GM12878 (cell line): ENCODE measurements at regions of chr9 and their contacts with region 1.

Region 1: DNA sequence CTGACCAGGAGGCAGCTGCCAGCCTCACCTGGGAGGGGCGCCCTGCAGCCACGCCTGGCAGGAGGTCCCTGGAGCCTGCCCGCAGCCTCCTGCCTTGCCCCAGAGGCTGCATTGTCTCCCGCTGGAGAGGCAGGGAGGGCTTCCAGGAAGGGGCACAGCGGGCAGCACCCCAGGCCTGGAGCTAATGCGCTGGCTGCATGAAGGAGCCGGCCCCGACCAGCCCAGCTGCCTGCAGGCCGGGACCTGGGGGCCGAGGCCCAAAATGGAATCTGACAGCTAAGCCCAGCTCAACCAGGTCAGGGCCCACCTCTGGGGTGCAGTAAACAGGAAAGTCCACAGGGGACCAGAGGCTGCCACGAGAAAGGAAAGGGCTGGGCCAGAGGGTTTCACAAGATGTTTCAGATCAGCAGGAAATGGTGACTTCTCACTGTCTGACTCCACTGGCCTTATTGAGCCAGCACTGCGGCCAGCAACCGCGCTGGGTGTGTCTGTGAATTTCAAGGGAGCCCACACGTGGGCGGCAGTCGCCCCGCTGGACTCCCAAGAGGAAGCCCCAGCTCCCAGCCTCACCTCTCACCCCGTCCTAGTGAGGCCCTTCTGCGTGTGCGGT is 18.6 kb upstream of the NOTCH1 start:
- DNase-seq: peak; percentile 63
- ATAC-seq: peak; percentile 94
- H3K4me3 ChIP-seq: no peak overlapping the region
- H3K27ac ChIP-seq: peak overlapping the region; percentile 24; the same call in 1 of the 2 replicates
- H3K4me1 ChIP-seq: peaks cover 29% of the 10 kb centered on the region
- H3K27me3 ChIP-seq: no peaks in the 10 kb centered on the region
- CTCF ChIP-seq: peak in 2 of 3 experiments; percentile 23 to 38; a peak in 3 of 6 replicates
- EP300 ChIP-seq: 0 out of 4 replicates have a peak, but pooled peaks of 1 of the 2 experiments have one; percentile 24
- POLR2A ChIP-seq: no peak
- RAD21 ChIP-seq: 0 out of 2 replicates have a peak, but pooled peaks have one; percentile 24

Region 2: GRCh38 chr9:136474974-136475865 is 89.3 kb before region 1 on chr9:
- CTCF ChIA-PET with region 1: no interaction called
- POLR2A ChIA-PET with region 1: no interaction called
- RAD21 ChIA-PET with region 1: no interaction called
- SMC1A ChIA-PET with region 1: no interaction called
- in situ Hi-C with region 1: no loop called
- intact Hi-C with region 1: no loop called
- DNase-seq: no peak
- ATAC-seq: no peak; the same call in 2 of the 3 replicates
- H3K4me3 ChIP-seq: no peak overlapping the region
- H3K27ac ChIP-seq: no peak overlapping the region
- H3K4me1 ChIP-seq: no peaks in the 10 kb centered on the region
- H3K27me3 ChIP-seq: no peaks in the 10 kb centered on the region
- CTCF ChIP-seq: no peak
- EP300 ChIP-seq: no peak
- POLR2A ChIP-seq: no peak; the same call in 1 of the 2 replicates
- RAD21 ChIP-seq: no peak

Region 3: GRCh38 chr9:136539427-136540421 is 24.8 kb before region 1 on chr9:
- CTCF ChIA-PET with region 1: interaction called, 5 read pairs
- POLR2A ChIA-PET with region 1: interaction called, 22 read pairs
- RAD21 ChIA-PET with region 1: interaction called, 18 read pairs
- SMC1A ChIA-PET with region 1: interaction called, 24 read pairs
- in situ Hi-C with region 1: no loop called
- intact Hi-C with region 1: no loop called
- DNase-seq: peak; percentile 70
- ATAC-seq: peak; percentile 84
- H3K4me3 ChIP-seq: peak overlapping the region; percentile 13
- H3K27ac ChIP-seq: peak overlapping the region; percentile 64
- H3K4me1 ChIP-seq: peaks cover 56% of the 10 kb centered on the region
- H3K27me3 ChIP-seq: no peaks in the 10 kb centered on the region
- CTCF ChIP-seq: no peak
- EP300 ChIP-seq: no peak
- POLR2A ChIP-seq: peak; percentile 50; the same call in 1 of the 2 replicates
- RAD21 ChIP-seq: no peak

Region 4: GRCh38 chr9:136545966-136546698 is 18.4 kb before region 1 on chr9 and contains the start of gene NOTCH1:
- CTCF ChIA-PET with region 1: interaction called, 5 read pairs
- POLR2A ChIA-PET with region 1: interaction called, 31 read pairs
- RAD21 ChIA-PET with region 1: interaction called, 4 read pairs
- SMC1A ChIA-PET with region 1: interaction called, 24 read pairs
- in situ Hi-C with region 1: no loop called
- intact Hi-C with region 1: no loop called
- DNase-seq: peak; percentile 80
- ATAC-seq: peak; percentile 83
- H3K4me3 ChIP-seq: peak within 1 kb of the TSS; percentile 99
- H3K27ac ChIP-seq: peak within 1 kb of the TSS; percentile 83
- H3K4me1 ChIP-seq: peaks cover 37% of the 10 kb centered on the region
- H3K27me3 ChIP-seq: no peaks in the 10 kb centered on the region
- CTCF ChIP-seq: peak in 1 of 3 experiments; percentile 6; a peak in 1 of 6 replicates
- EP300 ChIP-seq: no peak
- POLR2A ChIP-seq: peak; percentile 80
- RAD21 ChIP-seq: no peak
- polyA plus RNA-seq, gene NOTCH1: 0.02 to 0.24 TPM

Region 5: DNA sequence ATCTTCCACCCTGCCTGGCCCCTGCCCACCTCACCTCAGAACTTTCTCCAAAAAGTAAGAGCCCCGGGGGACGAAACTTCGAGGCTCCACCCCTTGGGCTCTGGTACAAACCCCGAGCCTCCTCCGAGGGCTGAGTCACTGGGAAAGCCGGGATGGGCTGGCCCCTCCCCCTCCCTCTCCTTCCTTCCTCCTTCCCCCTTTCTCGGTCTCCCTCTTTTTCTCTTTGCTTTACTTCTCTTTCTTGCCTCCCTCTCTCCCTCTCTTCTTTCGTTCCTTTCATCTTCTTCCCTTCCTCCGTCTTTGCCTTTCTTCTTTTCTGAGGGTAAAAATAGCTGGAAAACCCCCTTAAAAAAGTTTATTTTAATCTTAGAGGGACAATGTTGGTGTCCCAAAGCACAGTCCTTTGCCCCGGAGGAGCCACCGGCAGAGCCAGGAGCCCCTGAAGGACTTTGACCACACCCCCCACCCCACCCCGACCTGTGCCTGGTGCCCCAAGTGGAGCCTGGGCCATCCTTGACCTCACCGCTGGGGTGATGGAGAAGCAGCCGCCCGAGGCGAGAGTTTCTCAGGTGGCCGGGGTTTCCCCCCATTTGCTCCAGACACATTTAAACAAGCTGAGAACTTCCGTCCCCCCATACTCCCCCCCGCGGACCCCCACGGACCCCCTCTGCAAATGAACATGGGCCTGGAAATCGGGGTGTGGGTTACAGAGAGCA is 12.9 kb before region 1 on chr9:
- CTCF ChIA-PET with region 1: interaction called, 5 read pairs
- POLR2A ChIA-PET with region 1: interaction called, 31 read pairs
- RAD21 ChIA-PET with region 1: interaction called, 18 read pairs
- SMC1A ChIA-PET with region 1: interaction called, 23 read pairs
- in situ Hi-C with region 1: no loop called
- intact Hi-C with region 1: no loop called
- DNase-seq: no peak
- ATAC-seq: peak; percentile 85
- H3K4me3 ChIP-seq: peak overlapping the region; percentile 26; the same call in 1 of the 2 replicates
- H3K27ac ChIP-seq: peak overlapping the region; percentile 62
- H3K4me1 ChIP-seq: peaks cover 35% of the 10 kb centered on the region
- H3K27me3 ChIP-seq: no peaks in the 10 kb centered on the region
- CTCF ChIP-seq: peak in 1 of 3 experiments; percentile 31; a peak in 1 of 6 replicates
- EP300 ChIP-seq: no peak
- POLR2A ChIP-seq: no peak
- RAD21 ChIP-seq: no peak

Region 6: DNA sequence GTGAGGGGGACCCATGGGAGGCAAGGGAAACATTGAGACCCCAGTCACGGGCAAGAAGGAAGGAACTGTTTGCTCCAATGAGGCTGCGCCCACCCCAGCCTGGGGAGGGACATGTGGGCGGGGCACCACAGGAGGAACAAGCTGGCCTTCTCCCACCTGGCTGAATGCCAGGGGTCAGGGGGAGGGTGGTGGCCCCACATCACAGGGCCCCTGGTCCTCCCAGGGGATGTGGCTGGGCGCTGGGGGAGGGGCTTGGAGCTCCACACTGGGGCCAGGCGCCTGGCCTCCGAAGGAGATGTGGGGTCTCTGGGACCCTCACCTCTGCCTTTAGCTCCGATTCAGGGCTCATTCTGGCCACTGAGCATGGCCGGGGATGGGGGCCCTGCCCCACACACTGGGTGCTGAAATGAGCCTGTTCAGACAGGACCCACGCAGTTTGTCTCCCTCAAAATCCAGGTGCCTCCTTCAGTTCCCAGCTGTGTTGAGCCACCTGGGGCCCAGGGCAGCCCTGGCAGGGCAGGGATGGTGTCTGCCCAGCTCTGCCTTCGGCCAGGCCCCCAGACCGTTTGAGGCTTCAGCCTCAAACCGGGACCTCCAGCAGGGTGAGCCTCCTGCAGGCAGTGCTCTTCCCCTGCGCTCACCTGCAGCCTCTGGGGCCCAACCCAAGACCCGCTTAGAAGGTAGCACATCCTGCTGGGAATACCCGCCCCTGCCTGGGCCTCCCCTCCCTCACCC is 14.6 kb after region 1 on chr9:
- CTCF ChIA-PET with region 1: interaction called, 5 read pairs
- POLR2A ChIA-PET with region 1: interaction called, 4 read pairs
- RAD21 ChIA-PET with region 1: interaction called, 3 read pairs
- SMC1A ChIA-PET with region 1: interaction called, 10 read pairs
- in situ Hi-C with region 1: no loop called
- intact Hi-C with region 1: no loop called
- DNase-seq: no peak
- ATAC-seq: peak; percentile 42
- H3K4me3 ChIP-seq: no peak overlapping the region
- H3K27ac ChIP-seq: no peak overlapping the region
- H3K4me1 ChIP-seq: peaks cover 9% of the 10 kb centered on the region
- H3K27me3 ChIP-seq: no peaks in the 10 kb centered on the region
- CTCF ChIP-seq: no peak
- EP300 ChIP-seq: no peak
- POLR2A ChIP-seq: no peak
- RAD21 ChIP-seq: no peak

Region 7: GRCh38 chr9:136625101-136626060 is 60.9 kb after region 1 on chr9:
- CTCF ChIA-PET with region 1: interaction called, 10 read pairs
- POLR2A ChIA-PET with region 1: no interaction called
- RAD21 ChIA-PET with region 1: interaction called, 12 read pairs
- SMC1A ChIA-PET with region 1: interaction called, 6 read pairs
- in situ Hi-C with region 1: no loop called
- intact Hi-C with region 1: no loop called
- DNase-seq: no peak
- ATAC-seq: no peak; the same call in 1 of the 3 replicates
- H3K4me3 ChIP-seq: no peak overlapping the region
- H3K27ac ChIP-seq: no peak overlapping the region
- H3K4me1 ChIP-seq: no peaks in the 10 kb centered on the region; the same call in 1 of the 2 replicates
- H3K27me3 ChIP-seq: no peaks in the 10 kb centered on the region; a peak in 1 of 4 replicates
- CTCF ChIP-seq: peak; percentile 7 to 52 (median 31); a peak in 2 of 6 replicates
- EP300 ChIP-seq: no peak
- POLR2A ChIP-seq: no peak
- RAD21 ChIP-seq: peak; percentile 54

Region 8: DNA sequence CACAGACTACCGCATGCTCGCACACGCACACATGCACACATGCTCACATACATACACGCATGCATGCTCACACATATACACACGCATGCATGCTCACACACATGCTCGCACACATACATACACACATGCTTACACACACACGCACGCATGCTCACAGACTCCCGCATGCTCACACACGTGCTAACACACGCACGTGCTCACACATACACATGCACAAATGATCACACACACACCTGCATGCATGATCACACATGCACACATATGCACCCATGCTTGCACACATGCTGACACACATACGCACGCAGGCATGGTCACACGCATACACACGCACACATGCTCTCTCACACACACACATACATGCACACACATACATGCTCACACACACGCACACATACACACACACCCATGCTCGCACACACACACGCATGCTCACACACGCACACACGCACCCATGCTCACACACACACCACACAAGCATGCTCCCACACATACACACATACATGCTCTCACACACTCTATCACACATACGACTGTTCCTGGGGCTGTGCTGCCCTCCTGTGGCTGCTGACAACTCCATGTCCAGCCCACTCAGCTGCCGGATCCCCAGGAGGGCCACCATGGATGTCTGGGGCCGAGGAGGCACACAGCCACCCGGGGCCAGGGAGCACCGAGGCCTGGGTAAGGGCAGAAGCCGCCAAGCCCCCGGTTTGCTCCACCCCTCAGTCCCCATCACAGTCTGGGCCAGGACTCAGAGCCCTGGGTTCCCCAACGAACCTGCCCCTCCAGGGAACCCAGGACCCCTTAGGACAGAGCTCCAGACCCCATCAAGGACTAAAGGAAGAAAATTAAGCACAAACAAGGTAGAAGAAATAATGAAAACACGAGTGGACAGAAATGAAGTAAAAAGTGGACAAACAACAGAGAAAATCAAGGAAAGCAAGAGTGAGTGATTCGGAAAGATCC is 66.8 kb after region 1 on chr9:
- CTCF ChIA-PET with region 1: interaction called, 10 read pairs
- POLR2A ChIA-PET with region 1: no interaction called
- RAD21 ChIA-PET with region 1: interaction called, 5 read pairs
- SMC1A ChIA-PET with region 1: interaction called, 6 read pairs
- in situ Hi-C with region 1: no loop called
- intact Hi-C with region 1: no loop called
- DNase-seq: peak; percentile 40
- ATAC-seq: peak; percentile 96
- H3K4me3 ChIP-seq: no peak overlapping the region
- H3K27ac ChIP-seq: no peak overlapping the region
- H3K4me1 ChIP-seq: no peaks in the 10 kb centered on the region; the same call in 1 of the 2 replicates
- H3K27me3 ChIP-seq: no peaks in the 10 kb centered on the region; a peak in 2 of 4 replicates
- CTCF ChIP-seq: peak; percentile 72 to 89 (median 88)
- EP300 ChIP-seq: no peak
- POLR2A ChIP-seq: no peak
- RAD21 ChIP-seq: peak; percentile 98